CD14-positive monocyte (primary cell): ENCODE measurements at regions of chr2 and their contacts with region 1.

Region 1: GRCh38 chr2:111617299-111618225 is 266.4 kb downstream of the ANAPC1 start:
- DNase-seq: peak in 1 of 3 donors; percentile 33
- H3K4me3 ChIP-seq: peak overlapping the region in 1 of 3 experiments; percentile 29
- H3K4me3 Mint-ChIP-seq: peak overlapping the region in 1 of 2 donors; percentile 48
- H3K27ac ChIP-seq: peak overlapping the region; percentile 89 to 91
- H3K27ac Mint-ChIP-seq: peak overlapping the region; percentile 98 to 99 (median 99)
- H3K4me1 ChIP-seq: peaks cover 35 to 52% of the 10 kb centered on the region in 2 donors
- H3K4me1 Mint-ChIP-seq: peaks cover 47% of the 10 kb centered on the region
- H3K27me3 ChIP-seq: no peaks in the 10 kb centered on the region
- H3K27me3 Mint-ChIP-seq: peaks cover 0 to 2% (median 2%) of the 10 kb centered on the region in 3 donors
- CTCF ChIP-seq: no peak

Region 2: GRCh38 chr2:111659416-111660281 is 42.1 kb after region 1 on chr2:
- intact Hi-C with region 1: loop called in 1 of 2 experiments (anchors 5 kb)
- DNase-seq: peak; percentile 90 to 97 (median 92)
- H3K4me3 ChIP-seq: peak overlapping the region in 1 of 3 experiments; percentile 11
- H3K4me3 Mint-ChIP-seq: peak overlapping the region in 1 of 2 donors; percentile 21
- H3K27ac ChIP-seq: peak overlapping the region; percentile 86 to 91
- H3K27ac Mint-ChIP-seq: peak overlapping the region; percentile 93 to 97 (median 95)
- H3K4me1 ChIP-seq: peaks cover 44 to 56% of the 10 kb centered on the region in 2 donors
- H3K4me1 Mint-ChIP-seq: peaks cover 58% of the 10 kb centered on the region
- H3K27me3 ChIP-seq: no peaks in the 10 kb centered on the region
- H3K27me3 Mint-ChIP-seq: peaks cover 0 to 5% (median 2%) of the 10 kb centered on the region in 3 donors
- CTCF ChIP-seq: no peak

Region 3: DNA sequence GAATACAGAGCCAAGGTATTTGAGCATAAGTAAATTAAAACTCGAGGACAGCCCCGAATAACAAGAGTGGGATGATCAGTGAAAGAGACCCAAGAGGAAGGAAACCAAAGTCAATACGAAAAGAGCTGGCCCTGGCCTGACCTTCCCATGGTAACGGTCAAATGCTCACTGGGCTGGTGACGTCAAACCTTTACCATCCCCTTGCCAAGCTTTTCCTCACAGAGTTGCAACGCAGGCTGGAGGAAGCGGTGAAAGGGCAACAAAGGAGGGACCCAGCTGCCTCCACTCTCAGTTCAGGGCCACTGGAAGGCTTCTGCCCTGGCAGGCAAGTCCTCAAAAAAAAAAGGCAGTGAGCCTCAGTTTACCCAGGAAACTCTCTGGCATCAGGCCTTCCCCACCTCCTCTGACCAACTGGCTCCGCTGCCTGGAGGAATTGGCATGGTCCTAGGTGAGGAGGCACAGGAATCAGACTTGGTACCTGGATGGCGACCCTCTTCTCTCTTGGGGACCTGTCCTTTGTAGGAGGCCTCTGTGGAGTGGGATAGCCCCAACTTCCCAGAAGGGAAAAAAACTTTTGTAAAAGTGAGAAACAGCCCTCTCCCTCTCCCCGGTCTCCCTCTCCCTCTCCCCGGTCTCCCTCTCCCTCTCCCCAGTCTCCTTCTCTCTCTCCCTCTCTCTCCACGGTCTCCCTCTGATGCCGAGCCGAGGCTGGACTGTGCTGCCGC is 54.0 kb after region 1 on chr2:
- intact Hi-C with region 1: no loop called
- DNase-seq: peak; percentile 90 to 92 (median 91)
- H3K4me3 ChIP-seq: peak overlapping the region in 1 of 3 experiments; percentile 62
- H3K4me3 Mint-ChIP-seq: peak overlapping the region; percentile 24 to 53
- H3K27ac ChIP-seq: peak overlapping the region; percentile 73 to 76
- H3K27ac Mint-ChIP-seq: peak overlapping the region; percentile 90 to 97 (median 94)
- H3K4me1 ChIP-seq: peaks cover 42 to 64% of the 10 kb centered on the region in 2 donors
- H3K4me1 Mint-ChIP-seq: peaks cover 55% of the 10 kb centered on the region
- H3K27me3 ChIP-seq: no peaks in the 10 kb centered on the region
- H3K27me3 Mint-ChIP-seq: no peaks in the 10 kb centered on the region
- CTCF ChIP-seq: no peak

Region 4: GRCh38 chr2:112481050-112481527 is 863.5 kb after region 1 on chr2:
- intact Hi-C with region 1: no loop called
- DNase-seq: peak; percentile 67 to 74 (median 69)
- H3K4me3 ChIP-seq: peak overlapping the region; percentile 59 to 90 (median 68)
- H3K4me3 Mint-ChIP-seq: peak overlapping the region; percentile 99
- H3K27ac ChIP-seq: peak overlapping the region; percentile 80 to 89
- H3K27ac Mint-ChIP-seq: peak overlapping the region; percentile 91 to 98 (median 96)
- H3K4me1 ChIP-seq: peaks cover 21 to 31% of the 10 kb centered on the region in 2 donors
- H3K4me1 Mint-ChIP-seq: peaks cover 32% of the 10 kb centered on the region
- H3K27me3 ChIP-seq: no peaks in the 10 kb centered on the region
- H3K27me3 Mint-ChIP-seq: peaks cover 0 to 5% (median 3%) of the 10 kb centered on the region in 3 donors
- CTCF ChIP-seq: peak; percentile 82